GM10248 (cell line): ENCODE measurements at regions of chr1 and their contacts with region 1.

Region 1: DNA sequence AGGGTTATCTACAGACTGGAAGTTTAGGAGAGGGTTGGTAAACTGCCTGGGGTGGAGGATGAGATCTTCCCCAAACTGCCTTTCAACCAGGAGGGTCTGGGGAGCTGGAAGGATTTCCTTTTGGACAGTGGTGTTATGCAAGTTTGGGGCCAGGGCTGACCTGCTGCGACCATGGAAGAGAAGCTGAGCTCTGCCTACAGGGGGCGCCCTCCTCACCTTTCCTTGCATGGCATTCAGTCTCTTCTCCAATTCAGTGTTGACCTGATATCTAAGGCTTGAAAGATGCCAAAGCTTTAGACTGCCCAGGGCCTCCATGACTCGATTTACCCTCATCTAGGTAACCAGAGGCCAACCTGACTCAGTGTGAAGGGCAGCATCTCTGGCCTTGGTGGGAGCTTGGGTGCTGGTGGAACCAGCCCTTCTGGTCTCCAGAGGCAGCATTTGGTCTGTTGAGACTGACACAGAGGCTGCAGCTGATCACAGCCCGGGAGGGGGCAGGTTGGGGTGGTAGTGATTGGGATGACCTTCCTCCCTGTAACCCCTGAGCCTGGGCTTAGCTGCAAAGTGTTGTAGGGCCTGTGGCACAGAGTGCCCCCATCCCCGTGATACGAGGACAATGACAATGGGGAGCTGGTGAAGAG is 170.0 kb downstream of the GRIK3 start:
- DNase-seq: peak; percentile 49
- CTCF ChIP-seq: no peak

Region 2: GRCh38 chr1:36622741-36623648 is 241.3 kb before region 1 on chr1:
- CTCF ChIA-PET with region 1: no interaction called
- POLR2A ChIA-PET with region 1: no interaction called
- DNase-seq: no peak
- CTCF ChIP-seq: no peak

Region 3: GRCh38 chr1:36731226-36732014 is 132.9 kb before region 1 on chr1:
- CTCF ChIA-PET with region 1: no interaction called
- POLR2A ChIA-PET with region 1: no interaction called
- DNase-seq: no peak
- CTCF ChIP-seq: peak; percentile 8

Region 4: GRCh38 chr1:36851087-36851486 is 13.2 kb before region 1 on chr1:
- CTCF ChIA-PET with region 1: interaction called, 21 read pairs
- POLR2A ChIA-PET with region 1: no interaction called
- DNase-seq: no peak
- CTCF ChIP-seq: no peak

Region 5: GRCh38 chr1:36880155-36881067 is 16.1 kb after region 1 on chr1:
- CTCF ChIA-PET with region 1: interaction called, 11 read pairs
- POLR2A ChIA-PET with region 1: no interaction called
- DNase-seq: no peak
- CTCF ChIP-seq: no peak